ENCODE measurements at regions of chr14 and their contacts with region 1.

Region 1: DNA sequence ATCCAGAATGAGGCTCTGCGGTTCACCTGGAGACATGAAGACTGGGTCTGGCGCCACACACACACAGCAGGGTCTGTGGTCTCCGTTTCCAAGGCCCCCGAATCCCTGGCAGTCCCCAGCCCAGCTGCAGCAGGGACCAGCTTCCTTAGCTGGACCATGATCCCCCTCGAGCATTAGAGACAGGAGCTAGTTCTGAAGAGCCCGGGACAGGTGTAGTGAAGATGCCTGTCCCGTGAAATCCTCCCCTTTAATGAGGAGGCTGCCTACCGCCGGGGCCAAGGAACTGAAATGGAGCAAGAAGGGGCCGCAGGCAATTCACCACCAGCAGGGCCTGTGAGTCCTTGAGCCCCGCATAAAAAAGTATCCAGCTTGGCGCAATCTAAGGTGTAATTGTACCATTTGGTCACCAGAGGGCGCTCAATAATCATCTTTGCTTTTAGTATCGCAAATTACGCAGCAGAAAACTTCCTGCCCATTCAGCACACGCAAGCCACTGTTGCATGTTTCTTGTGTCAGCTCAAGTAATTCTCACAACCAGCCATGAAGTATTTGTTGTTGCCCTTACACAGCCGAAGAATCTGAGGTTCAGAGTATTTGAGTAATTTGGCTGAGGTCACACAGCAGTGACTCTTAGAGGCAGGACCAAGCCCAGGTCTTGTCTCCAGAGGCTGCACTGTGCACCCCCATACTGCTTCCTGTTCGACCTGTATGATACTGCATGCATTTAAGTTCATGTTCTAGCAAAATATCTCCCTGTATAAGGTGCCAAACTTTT is 54.3 kb upstream of the PPP2R5C start:
- DNase-seq: peak; percentile 73
- ATAC-seq: peak; percentile 71
- H3K4me3 Mint-ChIP-seq: peak overlapping the region; percentile 32
- H3K27ac Mint-ChIP-seq: peak overlapping the region; percentile 83
- H3K4me1 Mint-ChIP-seq: peaks cover 32% of the 10 kb centered on the region
- H3K27me3 Mint-ChIP-seq: no peaks in the 10 kb centered on the region
- CTCF ChIP-seq: peak; percentile 95

Region 2: GRCh38 chr14:101721951-101722661 is 14.9 kb after region 1 on chr14:
- CTCF ChIA-PET with region 1: interaction called, 16 read pairs
- POLR2A ChIA-PET with region 1: interaction called, 13 read pairs
- intact Hi-C with region 1: no loop called
- DNase-seq: peak; percentile 87
- ATAC-seq: peak; percentile 89
- H3K4me3 Mint-ChIP-seq: peak overlapping the region; percentile 63
- H3K27ac Mint-ChIP-seq: peak overlapping the region; percentile 95
- H3K4me1 Mint-ChIP-seq: peaks cover 37% of the 10 kb centered on the region
- H3K27me3 Mint-ChIP-seq: no peaks in the 10 kb centered on the region
- CTCF ChIP-seq: no peak

Region 3: GRCh38 chr14:101774006-101774795 is 66.9 kb after region 1 on chr14:
- CTCF ChIA-PET with region 1: interaction called, 55 read pairs
- POLR2A ChIA-PET with region 1: interaction called, 4 read pairs
- intact Hi-C with region 1: no loop called
- DNase-seq: no peak
- ATAC-seq: no peak
- H3K4me3 Mint-ChIP-seq: no peak overlapping the region
- H3K27ac Mint-ChIP-seq: peak overlapping the region; percentile 12
- H3K4me1 Mint-ChIP-seq: peaks cover 25% of the 10 kb centered on the region
- H3K27me3 Mint-ChIP-seq: peaks cover 1% of the 10 kb centered on the region
- CTCF ChIP-seq: no peak

Region 4: GRCh38 chr14:101843665-101844064 is 136.4 kb after region 1 on chr14:
- CTCF ChIA-PET with region 1: interaction called, 23 read pairs
- POLR2A ChIA-PET with region 1: interaction called, 3 read pairs
- intact Hi-C with region 1: no loop called
- DNase-seq: peak; percentile 81
- ATAC-seq: peak; percentile 65
- H3K4me3 Mint-ChIP-seq: no peak overlapping the region
- H3K27ac Mint-ChIP-seq: peak overlapping the region; percentile 79
- H3K4me1 Mint-ChIP-seq: peaks cover 82% of the 10 kb centered on the region
- H3K27me3 Mint-ChIP-seq: no peaks in the 10 kb centered on the region
- CTCF ChIP-seq: peak; percentile 64

Region 5: DNA sequence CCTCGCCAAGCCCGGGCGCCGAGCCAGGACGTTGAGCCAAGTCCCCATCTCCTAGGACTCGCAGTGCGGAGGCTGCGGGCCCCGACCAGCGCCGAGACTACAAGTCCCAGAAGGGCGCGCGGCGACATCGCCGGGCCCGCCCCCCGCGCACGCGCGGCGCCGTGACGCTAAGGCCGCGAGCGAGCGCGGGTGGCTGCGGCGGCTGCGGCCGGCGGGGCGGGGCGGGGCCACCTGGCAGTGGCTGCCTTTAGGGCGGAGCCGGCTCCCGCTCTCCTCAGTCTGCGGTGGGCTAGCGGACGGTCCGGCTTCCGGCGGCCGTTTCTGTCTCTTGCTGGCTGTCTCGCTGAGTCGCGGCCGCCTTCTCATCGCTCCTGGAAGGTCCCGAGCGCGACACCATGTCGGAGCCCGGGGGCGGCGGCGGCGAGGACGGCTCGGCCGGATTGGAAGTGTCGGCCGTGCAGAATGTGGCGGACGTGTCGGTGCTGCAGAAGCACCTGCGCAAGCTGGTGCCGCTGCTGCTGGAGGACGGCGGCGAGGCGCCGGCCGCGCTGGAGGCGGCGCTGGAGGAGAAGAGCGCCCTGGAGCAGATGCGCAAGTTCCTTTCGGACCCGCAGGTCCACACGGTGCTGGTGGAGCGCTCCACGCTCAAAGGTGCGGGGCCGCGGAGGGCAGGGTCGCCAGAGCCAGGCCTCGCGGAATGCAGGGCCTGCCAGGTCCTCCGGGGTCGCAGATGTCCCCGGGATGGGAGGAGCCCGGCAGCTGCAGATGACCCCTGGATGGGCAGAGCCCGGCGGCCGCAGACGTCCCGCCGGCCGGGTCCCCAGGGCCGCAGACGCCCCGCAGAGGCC is 257.3 kb after region 1 on chr14 and contains the start of gene DYNC1H1:
- CTCF ChIA-PET with region 1: interaction called, 16 read pairs
- POLR2A ChIA-PET with region 1: interaction called, 4 read pairs
- intact Hi-C with region 1: no loop called
- DNase-seq: peak; percentile 89
- ATAC-seq: peak; percentile 81
- H3K4me3 Mint-ChIP-seq: peak within 1 kb of the TSS; percentile 89
- H3K27ac Mint-ChIP-seq: peak within 1 kb of the TSS; percentile 93
- H3K4me1 Mint-ChIP-seq: peaks cover 32% of the 10 kb centered on the region
- H3K27me3 Mint-ChIP-seq: no peaks in the 10 kb centered on the region
- CTCF ChIP-seq: no peak
- total RNA-seq, gene DYNC1H1: 291 to 301 TPM

Measured in activated CD8-positive, alpha-beta T cell treated with anti-CD3 and anti-CD28 coated beads for 36 hours (primary cell).